Psoas muscle (tissue), 8 donors: ENCODE measurements at regions of chr7 and their contacts with region 1.

Region 1: DNA sequence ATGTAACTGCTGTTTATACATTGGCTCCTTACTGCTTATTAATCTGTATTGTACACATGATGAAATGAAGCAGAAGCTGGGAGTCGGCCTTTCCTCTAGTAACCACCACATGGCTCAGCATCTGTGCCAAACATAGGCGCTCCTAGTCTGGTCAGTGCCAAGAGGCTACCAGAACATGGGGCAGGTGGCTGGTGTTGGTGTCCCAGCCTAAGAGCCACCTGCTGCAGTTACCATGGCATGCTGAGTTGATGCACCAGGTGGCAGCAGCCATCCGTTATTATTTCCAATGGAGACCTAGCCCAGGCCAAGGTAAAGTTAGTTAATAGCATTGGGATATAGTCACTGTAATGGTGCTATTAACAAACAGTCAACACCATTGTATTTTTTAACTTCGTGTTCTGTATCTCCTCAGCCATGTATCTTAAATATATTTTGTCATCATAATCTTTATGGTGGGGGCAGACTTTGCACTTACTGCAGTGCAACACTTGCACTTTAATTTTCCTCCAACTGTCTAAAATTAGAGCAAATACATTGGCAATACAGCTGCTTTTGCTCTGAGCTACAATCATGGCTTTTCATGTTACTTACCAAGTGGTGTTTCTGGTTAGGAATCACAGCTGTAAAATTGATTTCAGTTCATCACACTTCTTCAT is 33.1 kb downstream of the HBP1 start:
- DNase-seq: peak; percentile 40 to 73
- ATAC-seq: peak; percentile 95 to 98 (median 98)
- H3K4me3 ChIP-seq: no peak overlapping the region
- H3K27ac ChIP-seq: peak overlapping the region; percentile 41
- H3K4me1 ChIP-seq: peaks cover 9% of the 10 kb centered on the region
- H3K27me3 ChIP-seq: no peaks in the 10 kb centered on the region
- CTCF ChIP-seq: peak; percentile 70

Region 2: DNA sequence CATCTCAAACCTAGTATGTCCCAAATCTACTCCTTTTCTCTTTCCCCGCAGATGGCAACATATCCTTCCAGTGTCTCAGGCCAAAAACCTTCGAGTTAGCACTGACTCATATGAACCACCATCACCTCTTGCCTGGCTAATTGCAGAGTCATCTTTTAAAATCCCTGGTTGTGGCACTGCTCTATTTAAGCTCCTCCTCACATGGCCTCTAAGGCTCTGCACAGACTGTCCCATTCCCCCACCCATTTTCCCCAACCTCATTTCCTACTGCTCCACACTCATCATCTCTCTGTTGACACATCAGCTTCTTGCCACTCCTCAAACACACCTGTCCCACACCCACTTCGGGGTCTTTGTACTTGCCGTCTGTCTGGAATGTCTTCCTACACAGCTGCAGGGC is 49.9 kb before region 1 on chr7:
- intact Hi-C with region 1: no loop called
- DNase-seq: no peak
- ATAC-seq: no peak
- H3K4me3 ChIP-seq: no peak overlapping the region
- H3K27ac ChIP-seq: no peak overlapping the region
- H3K4me1 ChIP-seq: peaks cover 8% of the 10 kb centered on the region
- H3K27me3 ChIP-seq: no peaks in the 10 kb centered on the region
- CTCF ChIP-seq: no peak

Region 3: GRCh38 chr7:107501593-107501992 is 299.7 kb after region 1 on chr7:
- intact Hi-C with region 1: loop called in 1 of 2 experiments (anchors 10 kb)
- DNase-seq: no peak
- ATAC-seq: peak in 1 of 4 donors; percentile 60
- H3K4me3 ChIP-seq: no peak overlapping the region
- H3K27ac ChIP-seq: no peak overlapping the region
- H3K4me1 ChIP-seq: peaks cover 5% of the 10 kb centered on the region
- H3K27me3 ChIP-seq: no peaks in the 10 kb centered on the region
- CTCF ChIP-seq: peak; percentile 28